ENCODE measurements at regions of chr5 and their contacts with region 1.

Region 1: GRCh38 chr5:58460732-58461286 is 923 bp upstream of the PLK2 start:
- DNase-seq: peak; percentile 93
- ATAC-seq: peak; percentile 81
- H3K4me3 Mint-ChIP-seq: peak overlapping the region; percentile 69
- H3K27ac Mint-ChIP-seq: peak overlapping the region; percentile 11
- H3K4me1 Mint-ChIP-seq: peaks cover 8% of the 10 kb centered on the region
- H3K27me3 Mint-ChIP-seq: peaks cover 11% of the 10 kb centered on the region

Region 2: DNA sequence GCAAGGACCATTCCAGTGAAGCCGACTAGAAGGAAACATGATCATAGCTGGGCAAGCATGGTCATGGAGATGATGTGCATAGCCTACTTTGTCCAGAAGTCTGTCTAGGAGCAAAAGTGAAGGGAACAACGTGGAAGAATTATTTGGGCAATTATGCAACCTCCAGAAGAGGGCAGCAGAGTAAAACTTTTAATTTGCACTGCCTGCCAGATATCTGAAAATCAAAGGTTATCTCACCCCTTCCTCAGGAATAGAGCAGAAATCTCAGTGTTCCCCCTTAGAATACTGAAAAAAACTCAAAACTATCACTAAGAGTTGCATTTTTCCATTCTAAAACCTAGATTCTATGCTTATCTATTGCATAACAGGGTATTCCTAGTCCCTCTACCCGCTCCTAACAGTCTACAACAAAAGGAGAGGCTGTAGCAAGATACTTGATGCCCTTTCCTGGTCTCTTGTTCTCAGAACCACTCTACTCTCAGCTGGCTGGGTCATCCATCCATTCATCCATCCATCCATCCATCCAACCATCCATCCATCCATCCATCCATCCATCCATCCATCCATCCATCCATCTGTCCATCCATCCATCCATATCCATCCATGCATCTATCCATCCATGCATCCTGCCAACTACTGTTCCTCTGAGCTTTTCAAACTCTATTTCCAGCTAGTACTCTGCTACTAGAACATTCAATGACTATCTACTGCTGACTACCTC is 1559.8 kb before region 1 on chr5:
- CTCF ChIA-PET with region 1: no interaction called
- POLR2A ChIA-PET with region 1: no interaction called
- intact Hi-C with region 1: loop called in 1 of 2 experiments (anchors 5 kb)
- DNase-seq: peak; percentile 36
- ATAC-seq: peak; percentile 54
- H3K4me3 Mint-ChIP-seq: no peak overlapping the region
- H3K27ac Mint-ChIP-seq: no peak overlapping the region
- H3K4me1 Mint-ChIP-seq: peaks cover 5% of the 10 kb centered on the region
- H3K27me3 Mint-ChIP-seq: no peaks in the 10 kb centered on the region

Region 3: GRCh38 chr5:57298295-57298984 is 1162.4 kb before region 1 on chr5:
- CTCF ChIA-PET with region 1: interaction called, 28 read pairs
- POLR2A ChIA-PET with region 1: interaction called, 3 read pairs
- intact Hi-C with region 1: loop called (anchors 1 kb)
- DNase-seq: peak; percentile 91
- ATAC-seq: peak; percentile 36
- H3K4me3 Mint-ChIP-seq: peak overlapping the region; percentile 56
- H3K27ac Mint-ChIP-seq: peak overlapping the region; percentile 62
- H3K4me1 Mint-ChIP-seq: peaks cover 40% of the 10 kb centered on the region
- H3K27me3 Mint-ChIP-seq: peaks cover 2% of the 10 kb centered on the region

Region 4: DNA sequence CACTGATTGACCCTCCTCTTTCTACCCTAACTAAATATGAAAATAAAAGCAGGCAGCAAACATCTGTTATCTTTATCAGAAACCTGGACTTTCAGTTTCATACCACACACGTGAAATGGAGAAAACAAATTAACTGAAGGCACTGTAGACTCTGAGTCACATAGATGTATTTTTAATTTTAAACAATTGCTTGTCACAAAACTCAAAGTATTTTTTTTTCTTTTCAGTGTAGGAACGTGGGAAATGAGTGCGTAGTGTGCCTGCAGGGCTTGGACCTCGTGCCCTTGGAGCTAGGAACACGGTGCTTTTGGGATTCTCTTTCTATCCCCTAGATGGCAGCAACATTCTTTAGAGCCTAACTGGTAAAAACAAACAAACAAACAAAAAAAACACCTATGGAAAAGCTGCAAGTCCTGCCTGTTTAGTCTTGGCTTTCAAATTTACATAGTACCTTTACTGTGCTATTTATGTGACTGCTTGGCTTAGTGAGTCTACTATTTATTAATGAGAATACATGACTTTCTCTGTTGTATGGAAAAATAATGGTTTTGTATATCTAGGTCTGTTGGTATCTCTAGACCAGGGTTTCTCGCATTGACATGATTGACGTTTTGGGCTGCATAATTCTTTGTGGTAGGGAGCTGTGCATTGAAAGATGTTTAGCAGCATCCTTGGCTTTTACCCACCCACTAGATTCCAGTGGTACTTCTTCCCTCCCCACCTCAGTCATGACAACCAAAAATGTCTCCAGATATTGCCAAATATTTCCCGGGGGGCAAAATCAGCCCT is 961.4 kb before region 1 on chr5:
- CTCF ChIA-PET with region 1: interaction called, 4 read pairs
- POLR2A ChIA-PET with region 1: no interaction called
- intact Hi-C with region 1: loop called (anchors 1 to 5 kb)
- DNase-seq: peak; percentile 28
- ATAC-seq: peak; percentile 67
- H3K4me3 Mint-ChIP-seq: peak overlapping the region; percentile 33
- H3K27ac Mint-ChIP-seq: no peak overlapping the region
- H3K4me1 Mint-ChIP-seq: peaks cover 27% of the 10 kb centered on the region
- H3K27me3 Mint-ChIP-seq: peaks cover 2% of the 10 kb centered on the region

Region 5: GRCh38 chr5:57650360-57651069 is 810.3 kb before region 1 on chr5:
- CTCF ChIA-PET with region 1: interaction called, 6 read pairs
- POLR2A ChIA-PET with region 1: no interaction called
- intact Hi-C with region 1: loop called (anchors 1 to 2 kb)
- DNase-seq: peak; percentile 30
- ATAC-seq: no peak
- H3K4me3 Mint-ChIP-seq: no peak overlapping the region
- H3K27ac Mint-ChIP-seq: no peak overlapping the region
- H3K4me1 Mint-ChIP-seq: no peaks in the 10 kb centered on the region
- H3K27me3 Mint-ChIP-seq: peaks cover 8% of the 10 kb centered on the region

Region 6: DNA sequence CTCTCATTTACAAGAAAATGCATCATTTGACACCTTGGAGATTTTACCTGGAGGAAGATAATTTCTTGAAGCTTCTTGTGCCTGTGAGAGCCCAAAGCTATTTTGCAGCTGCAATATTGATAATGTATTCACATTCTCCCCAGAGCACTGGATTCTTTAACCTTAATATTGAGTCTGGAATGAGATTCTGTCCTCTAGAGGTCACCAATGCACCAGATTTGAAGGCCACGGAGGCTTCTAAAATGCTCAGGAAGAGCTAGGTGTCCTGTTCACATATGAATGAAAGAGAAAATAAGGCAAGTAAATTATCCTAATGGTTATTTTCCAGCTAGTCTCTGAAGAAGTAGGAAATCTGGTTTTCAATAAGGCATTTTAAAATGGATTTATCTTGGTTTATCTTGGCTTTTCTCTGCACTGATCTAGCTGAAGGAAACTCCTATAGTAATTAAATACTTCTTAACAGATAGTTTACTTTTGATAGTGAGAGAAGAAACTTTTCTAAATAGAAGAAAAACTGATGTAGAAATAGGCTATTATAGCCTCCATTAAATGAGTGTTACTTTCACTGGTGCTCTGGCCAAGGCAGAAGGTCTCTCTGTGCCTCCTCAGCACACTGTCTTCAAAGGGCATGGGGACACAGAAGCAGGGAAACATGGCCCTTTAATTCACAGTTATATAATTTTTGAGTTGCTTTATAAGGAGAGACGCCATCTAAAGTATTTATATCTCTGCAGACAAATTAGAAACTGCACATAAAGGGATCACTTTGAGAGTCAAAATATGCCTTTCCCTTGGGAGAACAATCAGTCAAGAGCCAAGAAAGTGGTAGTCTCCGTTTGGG is 681.2 kb before region 1 on chr5:
- CTCF ChIA-PET with region 1: interaction called, 50 read pairs
- POLR2A ChIA-PET with region 1: no interaction called
- intact Hi-C with region 1: loop called (anchors 1 kb)
- DNase-seq: peak; percentile 28
- ATAC-seq: no peak
- H3K4me3 Mint-ChIP-seq: no peak overlapping the region
- H3K27ac Mint-ChIP-seq: no peak overlapping the region
- H3K4me1 Mint-ChIP-seq: no peaks in the 10 kb centered on the region
- H3K27me3 Mint-ChIP-seq: peaks cover 4% of the 10 kb centered on the region